T-cell (primary cell): ENCODE measurements at regions of chr7 and their contacts with region 1.

Region 1: DNA sequence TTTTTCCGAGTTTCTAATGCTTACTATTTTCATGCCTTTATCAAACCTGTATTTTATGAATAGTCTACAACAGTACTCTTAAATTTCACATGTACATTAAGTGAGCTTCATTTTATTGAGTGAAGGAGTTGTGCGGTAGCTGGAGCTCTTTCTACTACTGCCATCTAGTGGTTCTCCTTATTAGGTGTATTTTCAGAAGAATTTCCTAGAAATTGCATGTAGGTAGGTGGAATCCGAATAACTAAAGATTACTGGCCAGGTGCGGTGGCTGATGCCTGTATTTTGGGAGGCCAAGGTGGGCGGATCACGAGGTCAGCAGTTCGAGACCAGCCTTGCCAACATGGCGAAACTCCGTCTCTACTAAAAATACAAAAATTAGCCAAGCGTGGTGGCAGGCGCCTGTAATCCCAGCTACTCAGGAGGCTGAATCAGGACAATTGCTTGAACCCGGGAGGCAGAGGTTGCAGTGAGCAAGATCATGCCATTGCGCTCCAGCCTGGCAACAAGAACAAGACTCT is 38.3 kb downstream of the LRRC72 start:
- DNase-seq: peak in 1 of 35 experiments; percentile 63
- ATAC-seq: peak in 3 of 4 experiments; percentile 36 to 57 (median 53)
- H3K4me3 ChIP-seq: no peak overlapping the region
- H3K4me3 Mint-ChIP-seq: peak overlapping the region in 1 of 3 donors; percentile 49
- H3K27ac ChIP-seq: no peak overlapping the region
- H3K27ac Mint-ChIP-seq: peak overlapping the region in 1 of 2 donors; percentile 45
- H3K4me1 ChIP-seq: peaks cover 0 to 9% of the 10 kb centered on the region in 2 experiments
- H3K4me1 Mint-ChIP-seq: peaks cover 22 to 24% (median 23%) of the 10 kb centered on the region in 3 donors
- H3K27me3 ChIP-seq: no peaks in the 10 kb centered on the region
- H3K27me3 Mint-ChIP-seq: peaks cover 8 to 11% of the 10 kb centered on the region in 2 donors

Region 2: GRCh38 chr7:16078076-16078952 is 486.7 kb before region 1 on chr7:
- CTCF ChIA-PET with region 1: interaction called, 17 to 62 read pairs
- POLR2A ChIA-PET with region 1: no interaction called
- DNase-seq: peak in 4 of 35 experiments; percentile 2 to 58 (median 9)
- ATAC-seq: no peak
- H3K4me3 ChIP-seq: no peak overlapping the region
- H3K4me3 Mint-ChIP-seq: no peak overlapping the region
- H3K27ac ChIP-seq: no peak overlapping the region
- H3K27ac Mint-ChIP-seq: no peak overlapping the region
- H3K4me1 ChIP-seq: no peaks in the 10 kb centered on the region
- H3K4me1 Mint-ChIP-seq: peaks cover 0 to 4% (median 4%) of the 10 kb centered on the region in 3 donors
- H3K27me3 ChIP-seq: no peaks in the 10 kb centered on the region
- H3K27me3 Mint-ChIP-seq: no peaks in the 10 kb centered on the region

Region 3: GRCh38 chr7:16420649-16421332 is 144.2 kb before region 1 on chr7:
- CTCF ChIA-PET with region 1: interaction called, 6 to 11 read pairs
- POLR2A ChIA-PET with region 1: interaction called in 1 of 2 experiments, 3 read pairs
- DNase-seq: peak; percentile 4 to 91 (median 79)
- ATAC-seq: peak; percentile 89 to 92 (median 90)
- H3K4me3 ChIP-seq: peak overlapping the region; percentile 75 to 78
- H3K4me3 Mint-ChIP-seq: peak overlapping the region; percentile 77 to 88 (median 88)
- H3K27ac ChIP-seq: peak overlapping the region; percentile 92
- H3K27ac Mint-ChIP-seq: peak overlapping the region; percentile 70 to 90
- H3K4me1 ChIP-seq: peaks cover 12 to 14% of the 10 kb centered on the region in 2 experiments
- H3K4me1 Mint-ChIP-seq: peaks cover 13 to 25% (median 16%) of the 10 kb centered on the region in 3 donors
- H3K27me3 ChIP-seq: no peaks in the 10 kb centered on the region
- H3K27me3 Mint-ChIP-seq: peaks cover 0 to 21% of the 10 kb centered on the region in 2 donors

Region 4: GRCh38 chr7:16431646-16432424 is 133.1 kb before region 1 on chr7:
- CTCF ChIA-PET with region 1: interaction called, 44 to 50 read pairs
- POLR2A ChIA-PET with region 1: no interaction called
- DNase-seq: peak in 16 of 35 experiments; percentile 8 to 64 (median 14)
- ATAC-seq: peak; percentile 45 to 84 (median 66)
- H3K4me3 ChIP-seq: no peak overlapping the region
- H3K4me3 Mint-ChIP-seq: no peak overlapping the region
- H3K27ac ChIP-seq: no peak overlapping the region
- H3K27ac Mint-ChIP-seq: no peak overlapping the region
- H3K4me1 ChIP-seq: no peaks in the 10 kb centered on the region
- H3K4me1 Mint-ChIP-seq: peaks cover 0 to 2% (median 0%) of the 10 kb centered on the region in 3 donors
- H3K27me3 ChIP-seq: no peaks in the 10 kb centered on the region
- H3K27me3 Mint-ChIP-seq: no peaks in the 10 kb centered on the region

Region 5: DNA sequence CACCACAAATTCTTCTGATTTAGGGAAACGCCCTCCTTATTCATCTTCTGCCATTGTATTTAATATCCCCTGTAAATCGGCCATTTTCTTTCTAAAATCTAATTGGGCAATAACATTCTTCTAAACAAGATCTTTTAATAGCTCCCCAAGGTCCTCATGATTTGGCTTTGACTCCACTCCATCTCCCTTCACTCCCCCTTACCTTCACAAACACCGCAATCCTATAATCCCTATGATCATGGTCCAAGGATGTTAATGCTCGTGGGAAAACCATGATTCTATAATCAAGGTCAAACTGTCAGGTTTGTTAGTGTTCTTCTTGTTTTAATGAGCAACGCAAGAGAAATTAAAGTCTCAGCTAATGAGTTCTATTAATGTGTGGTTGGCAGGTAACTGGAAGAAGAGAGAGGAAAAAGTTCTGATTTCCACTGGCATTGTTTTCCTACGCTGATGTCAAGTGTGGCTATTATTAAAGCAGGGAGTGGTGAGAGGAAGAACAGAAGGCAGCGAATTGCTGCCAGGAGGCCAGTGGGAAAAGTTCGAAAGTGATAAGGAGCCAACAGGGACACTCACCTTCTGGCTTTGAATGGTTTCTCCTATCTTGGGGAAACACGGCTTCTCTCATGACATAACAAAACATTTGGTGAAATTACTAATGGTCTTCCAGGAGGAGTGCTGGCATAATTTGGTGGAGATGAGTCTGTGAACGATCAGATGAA is 10.3 kb before region 1 on chr7:
- CTCF ChIA-PET with region 1: interaction called, 11 to 15 read pairs
- POLR2A ChIA-PET with region 1: no interaction called
- DNase-seq: no peak
- ATAC-seq: no peak
- H3K4me3 ChIP-seq: no peak overlapping the region
- H3K4me3 Mint-ChIP-seq: no peak overlapping the region
- H3K27ac ChIP-seq: no peak overlapping the region
- H3K27ac Mint-ChIP-seq: no peak overlapping the region
- H3K4me1 ChIP-seq: no peaks in the 10 kb centered on the region
- H3K4me1 Mint-ChIP-seq: no peaks in the 10 kb centered on the region
- H3K27me3 ChIP-seq: no peaks in the 10 kb centered on the region
- H3K27me3 Mint-ChIP-seq: peaks cover 4 to 9% of the 10 kb centered on the region in 2 donors

Region 6: DNA sequence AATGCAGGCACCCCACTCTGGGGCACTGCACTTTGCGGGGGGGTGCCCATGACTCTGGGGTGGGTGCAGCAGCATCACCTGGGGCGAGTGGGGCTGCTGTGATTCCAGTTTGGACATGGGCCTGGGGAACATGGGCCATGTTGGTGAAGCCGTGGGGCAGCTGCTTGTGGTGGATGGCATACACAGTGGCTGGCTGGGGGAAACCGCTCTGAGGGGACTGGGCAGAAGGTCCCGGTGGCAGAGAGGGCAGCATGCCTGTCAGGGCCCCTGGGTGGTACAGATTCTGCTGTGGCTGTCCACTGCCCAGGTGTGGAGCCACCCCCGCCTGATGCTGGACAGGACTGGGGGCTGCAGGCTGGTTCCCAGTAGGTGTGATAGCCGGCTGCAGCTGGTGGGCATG is 18.9 kb after region 1 on chr7:
- CTCF ChIA-PET with region 1: interaction called, 3 to 10 read pairs
- POLR2A ChIA-PET with region 1: no interaction called
- DNase-seq: no peak
- ATAC-seq: no peak
- H3K4me3 ChIP-seq: no peak overlapping the region
- H3K4me3 Mint-ChIP-seq: no peak overlapping the region
- H3K27ac ChIP-seq: no peak overlapping the region
- H3K27ac Mint-ChIP-seq: no peak overlapping the region
- H3K4me1 ChIP-seq: no peaks in the 10 kb centered on the region
- H3K4me1 Mint-ChIP-seq: peaks cover 0 to 1% (median 0%) of the 10 kb centered on the region in 3 donors
- H3K27me3 ChIP-seq: peaks cover 0 to 22% of the 10 kb centered on the region in 2 experiments
- H3K27me3 Mint-ChIP-seq: peaks cover 5 to 7% of the 10 kb centered on the region in 2 donors

Region 7: GRCh38 chr7:16609842-16610450 is 45.0 kb after region 1 on chr7:
- CTCF ChIA-PET with region 1: no interaction called
- POLR2A ChIA-PET with region 1: no interaction called
- DNase-seq: no peak
- ATAC-seq: no peak
- H3K4me3 ChIP-seq: no peak overlapping the region
- H3K4me3 Mint-ChIP-seq: no peak overlapping the region
- H3K27ac ChIP-seq: no peak overlapping the region
- H3K27ac Mint-ChIP-seq: no peak overlapping the region
- H3K4me1 ChIP-seq: no peaks in the 10 kb centered on the region
- H3K4me1 Mint-ChIP-seq: no peaks in the 10 kb centered on the region
- H3K27me3 ChIP-seq: no peaks in the 10 kb centered on the region
- H3K27me3 Mint-ChIP-seq: no peaks in the 10 kb centered on the region